ENCODE measurements at regions of chr16 and their contacts with region 1.

Region 1: DNA sequence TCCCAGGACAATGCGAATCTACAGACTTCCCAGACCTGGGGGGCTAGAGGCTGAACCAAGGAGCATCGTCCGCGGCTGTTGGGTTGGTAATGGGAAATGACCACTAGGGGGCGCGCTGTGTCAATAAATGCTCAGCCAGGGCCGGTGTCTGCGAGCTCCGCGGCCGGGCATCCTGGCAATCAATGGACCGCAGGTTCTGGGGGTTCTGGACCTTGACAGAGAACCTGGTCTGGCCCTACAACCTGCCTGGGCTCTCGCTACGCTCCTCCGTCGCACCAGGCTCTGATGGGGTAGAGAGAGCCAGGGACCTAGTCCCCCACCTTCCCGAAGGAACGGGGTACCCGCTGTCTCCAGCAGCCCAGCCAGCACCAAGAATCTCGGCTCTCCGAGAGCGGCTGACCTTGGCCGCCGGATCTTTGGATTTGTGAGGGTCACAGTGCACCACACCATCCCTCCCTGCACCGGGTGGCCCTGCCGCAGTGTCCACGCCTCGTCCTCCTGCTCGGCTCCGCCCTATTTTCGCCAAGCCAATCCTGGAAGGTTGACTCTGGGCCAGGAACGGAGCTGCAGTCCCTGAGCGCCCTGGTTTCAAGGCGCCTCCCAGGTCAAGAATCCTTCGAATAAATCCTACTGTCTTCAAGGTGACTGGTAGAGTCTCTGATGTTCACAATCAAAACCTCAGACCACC is 20.4 kb upstream of the BEAN1 start:
- DNase-seq: peak; percentile 94
- ATAC-seq: peak; percentile 82
- H3K4me3 Mint-ChIP-seq: peak overlapping the region; percentile 81
- H3K27ac Mint-ChIP-seq: peak overlapping the region; percentile 67
- H3K4me1 Mint-ChIP-seq: peaks cover 23% of the 10 kb centered on the region
- H3K27me3 Mint-ChIP-seq: peaks cover 8% of the 10 kb centered on the region
- CTCF ChIP-seq: peak; percentile 85

Region 2: GRCh38 chr16:66377324-66377723 is 29.4 kb before region 1 on chr16:
- CTCF ChIA-PET with region 1: no interaction called
- POLR2A ChIA-PET with region 1: no interaction called
- intact Hi-C with region 1: no loop called
- DNase-seq: no peak
- ATAC-seq: no peak
- H3K4me3 Mint-ChIP-seq: no peak overlapping the region
- H3K27ac Mint-ChIP-seq: no peak overlapping the region
- H3K4me1 Mint-ChIP-seq: no peaks in the 10 kb centered on the region
- H3K27me3 Mint-ChIP-seq: no peaks in the 10 kb centered on the region
- CTCF ChIP-seq: no peak

Region 3: GRCh38 chr16:66455970-66456369 is 49.3 kb after region 1 on chr16:
- CTCF ChIA-PET with region 1: interaction called, 10 read pairs
- POLR2A ChIA-PET with region 1: no interaction called
- intact Hi-C with region 1: no loop called
- DNase-seq: no peak
- ATAC-seq: no peak
- H3K4me3 Mint-ChIP-seq: no peak overlapping the region
- H3K27ac Mint-ChIP-seq: no peak overlapping the region
- H3K4me1 Mint-ChIP-seq: no peaks in the 10 kb centered on the region
- H3K27me3 Mint-ChIP-seq: peaks cover 3% of the 10 kb centered on the region
- CTCF ChIP-seq: no peak

Region 4: DNA sequence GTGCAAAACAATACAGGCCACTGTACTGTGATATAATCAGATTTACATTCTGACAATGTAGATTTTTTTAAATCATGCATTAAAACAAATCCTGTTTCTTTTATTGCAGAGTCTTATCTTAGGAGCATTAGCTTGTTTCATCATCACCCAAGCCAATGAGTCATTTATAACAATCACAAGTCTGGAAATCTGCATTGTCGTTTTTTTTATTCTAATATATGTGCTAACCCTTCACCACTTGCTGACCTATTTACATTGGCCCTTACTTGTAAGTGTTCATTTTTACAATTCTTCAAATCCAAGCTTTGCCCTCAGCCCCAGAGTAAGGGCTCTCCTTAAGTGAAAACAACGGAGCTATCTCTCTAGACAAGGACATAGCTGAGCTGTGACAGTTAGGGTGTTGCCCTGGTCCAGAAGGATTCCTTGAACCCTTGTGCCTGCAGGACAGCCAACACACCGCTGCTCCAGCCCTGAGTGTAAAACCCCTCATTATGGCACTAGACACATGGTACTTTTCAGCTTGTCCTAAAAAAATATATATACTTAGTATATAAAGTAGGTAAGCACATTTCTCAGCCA is 163.2 kb after region 1 on chr16:
- CTCF ChIA-PET with region 1: interaction called, 10 read pairs
- POLR2A ChIA-PET with region 1: no interaction called
- intact Hi-C with region 1: no loop called
- DNase-seq: no peak
- ATAC-seq: no peak
- H3K4me3 Mint-ChIP-seq: no peak overlapping the region
- H3K27ac Mint-ChIP-seq: no peak overlapping the region
- H3K4me1 Mint-ChIP-seq: peaks cover 16% of the 10 kb centered on the region
- H3K27me3 Mint-ChIP-seq: no peaks in the 10 kb centered on the region
- CTCF ChIP-seq: no peak

Region 5: DNA sequence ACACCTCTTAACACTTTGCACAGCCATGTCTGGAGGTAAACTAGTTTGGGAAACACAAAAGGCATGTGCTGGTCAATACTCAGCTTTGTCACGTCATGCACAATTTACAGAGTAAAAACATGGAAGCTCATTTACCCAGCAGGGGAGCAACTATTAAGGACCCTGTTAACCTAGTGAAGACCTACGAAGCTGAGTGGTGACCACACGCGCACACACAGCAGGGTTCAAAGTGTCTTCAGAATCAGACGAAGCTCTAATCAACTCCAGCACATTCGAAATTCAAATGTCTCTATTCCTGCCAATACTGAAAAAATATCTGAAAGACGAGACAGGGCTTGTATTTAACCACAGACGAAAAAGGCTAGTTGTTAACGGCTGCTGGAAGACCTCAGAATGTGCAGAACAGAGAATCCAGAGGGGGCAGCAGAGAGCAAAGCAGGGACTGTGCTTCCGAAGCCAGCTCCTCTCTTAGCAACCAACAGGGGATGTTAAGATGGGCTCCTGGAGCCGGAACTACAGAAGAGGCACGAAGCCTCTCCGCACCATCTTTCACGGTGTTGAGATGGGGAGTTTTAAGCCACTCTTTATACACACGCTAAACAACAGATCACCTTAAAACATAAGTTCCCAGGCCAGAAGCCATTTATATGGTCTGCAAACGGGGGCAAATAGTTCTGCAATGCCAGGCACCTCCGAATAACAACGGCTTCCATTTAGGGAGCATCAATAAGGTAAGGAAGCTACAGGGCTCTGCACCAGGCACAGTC is 244.2 kb after region 1 on chr16:
- CTCF ChIA-PET with region 1: interaction called, 14 read pairs
- POLR2A ChIA-PET with region 1: no interaction called
- intact Hi-C with region 1: no loop called
- DNase-seq: peak; percentile 90
- ATAC-seq: peak; percentile 100
- H3K4me3 Mint-ChIP-seq: peak overlapping the region; percentile 15
- H3K27ac Mint-ChIP-seq: no peak overlapping the region
- H3K4me1 Mint-ChIP-seq: peaks cover 16% of the 10 kb centered on the region
- H3K27me3 Mint-ChIP-seq: no peaks in the 10 kb centered on the region
- CTCF ChIP-seq: peak; percentile 96

Measured in activated CD8-positive, alpha-beta T cell treated with anti-CD3 and anti-CD28 coated beads for 36 hours (primary cell).